ENCODE measurements at regions of chr1 and their contacts with region 1.

Region 1: DNA sequence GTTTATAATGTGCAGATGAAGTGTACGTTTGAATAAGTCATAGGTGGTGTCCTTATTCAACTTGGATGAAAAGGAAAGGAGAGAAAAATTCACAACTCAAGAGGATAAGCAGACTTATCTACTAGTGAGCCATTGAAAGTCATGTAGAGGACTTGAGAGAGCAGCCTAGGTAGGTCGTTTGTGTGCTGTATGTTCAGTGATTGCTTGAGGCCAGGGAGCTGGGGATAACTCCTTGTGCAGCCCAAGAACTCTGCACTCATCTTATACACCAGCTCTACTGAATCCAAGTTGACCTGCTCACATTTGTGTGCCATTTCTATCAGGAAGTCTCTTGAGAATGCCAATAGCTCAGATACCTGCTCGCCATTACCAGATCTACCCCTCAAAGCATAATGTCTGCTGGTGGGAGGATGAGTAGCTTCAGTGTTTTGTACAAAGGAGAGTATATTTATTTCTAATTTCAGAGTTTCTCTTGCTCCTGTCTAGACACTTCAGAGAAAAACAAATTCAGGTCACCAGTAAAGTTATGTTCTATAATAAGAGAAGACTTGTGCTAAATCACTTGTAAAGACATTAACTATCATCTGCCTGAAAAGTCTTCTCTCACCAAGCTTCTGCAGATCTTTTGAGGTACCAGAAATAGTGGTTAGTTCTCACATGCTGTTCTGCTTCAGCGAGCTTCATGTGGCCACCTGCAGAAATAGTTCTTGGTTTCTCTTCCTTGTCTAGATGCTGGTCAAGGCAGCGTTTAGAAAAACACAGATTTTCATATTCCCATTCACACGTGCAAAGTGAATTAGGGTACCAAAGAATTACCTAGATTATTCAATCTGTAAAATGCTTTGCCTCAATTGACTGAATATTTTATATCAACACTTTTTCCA is 10.8 kb downstream of the S1PR1 start:
- DNase-seq: no peak
- H3K4me3 ChIP-seq: no peak overlapping the region
- H3K4me3 Mint-ChIP-seq: no peak overlapping the region
- H3K27ac ChIP-seq: no peak overlapping the region
- H3K27ac Mint-ChIP-seq: peak overlapping the region in 1 of 7 donors; percentile 8
- H3K4me1 ChIP-seq: no peaks in the 10 kb centered on the region
- H3K4me1 Mint-ChIP-seq: no peaks in the 10 kb centered on the region
- H3K27me3 ChIP-seq: no peaks in the 10 kb centered on the region
- H3K27me3 Mint-ChIP-seq: peaks cover 2 to 5% (median 3%) of the 10 kb centered on the region in 3 donors
- CTCF ChIP-seq: no peak

Region 2: DNA sequence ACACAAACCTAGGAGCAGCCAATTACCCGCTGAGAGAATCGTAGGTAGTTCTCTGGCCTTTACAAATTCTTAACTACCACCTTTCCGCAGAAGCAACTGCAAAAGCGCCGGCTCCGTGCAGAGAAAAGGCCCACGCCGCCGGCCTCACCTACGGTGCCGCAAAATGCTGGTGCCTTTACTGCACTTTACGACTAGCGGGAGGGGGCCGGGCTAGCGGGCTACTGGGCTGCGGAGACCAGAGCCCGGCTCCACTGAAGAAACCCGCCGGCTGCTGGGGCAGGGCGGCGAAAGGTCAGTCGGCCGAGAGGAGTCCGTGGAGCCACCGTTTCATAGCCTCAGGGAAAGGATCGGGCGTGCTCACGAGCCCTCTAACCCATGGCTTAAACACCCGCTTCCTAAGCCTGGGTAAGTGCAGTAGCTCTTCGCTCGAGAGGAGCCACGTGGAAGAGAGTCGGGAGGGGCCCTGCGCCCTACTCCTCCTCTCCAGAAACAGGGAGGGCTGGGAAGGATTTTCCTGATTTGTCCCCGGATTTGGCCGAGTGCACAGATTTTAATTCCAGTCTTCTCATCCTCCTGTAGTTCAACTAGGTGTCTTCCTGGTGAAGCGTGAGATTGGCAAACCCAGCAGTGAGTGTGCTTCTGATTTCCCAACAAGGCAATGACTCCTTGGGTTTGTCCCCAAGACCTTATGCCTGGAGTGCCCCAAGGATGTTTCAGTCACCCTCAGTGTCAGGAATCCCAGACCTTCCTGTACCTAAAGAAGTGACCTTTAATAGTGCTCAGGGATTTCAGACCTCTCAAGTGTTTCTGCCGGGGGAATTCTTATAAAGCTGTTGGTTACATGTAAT is 221.8 kb before region 1 on chr1 and contains the start of gene DPH5:
- intact Hi-C with region 1: loop called in 1 of 2 experiments (anchors 10 kb)
- DNase-seq: peak; percentile 73 to 97 (median 86)
- H3K4me3 ChIP-seq: peak within 1 kb of the TSS; percentile 80 to 92 (median 89)
- H3K4me3 Mint-ChIP-seq: peak within 1 kb of the TSS; percentile 95 to 99
- H3K27ac ChIP-seq: peak within 1 kb of the TSS; percentile 75 to 95
- H3K27ac Mint-ChIP-seq: peak within 1 kb of the TSS; percentile 84 to 96 (median 94)
- H3K4me1 ChIP-seq: peaks cover 24 to 43% of the 10 kb centered on the region in 2 donors
- H3K4me1 Mint-ChIP-seq: peaks cover 41% of the 10 kb centered on the region
- H3K27me3 ChIP-seq: no peaks in the 10 kb centered on the region
- H3K27me3 Mint-ChIP-seq: no peaks in the 10 kb centered on the region
- CTCF ChIP-seq: no peak
- polyA plus RNA-seq, gene DPH5: 10.3 to 14.3 (median 12.0) TPM

Region 3: GRCh38 chr1:101198842-101199636 is 48.6 kb before region 1 on chr1:
- intact Hi-C with region 1: no loop called
- DNase-seq: no peak
- H3K4me3 ChIP-seq: no peak overlapping the region
- H3K4me3 Mint-ChIP-seq: no peak overlapping the region
- H3K27ac ChIP-seq: no peak overlapping the region
- H3K27ac Mint-ChIP-seq: no peak overlapping the region
- H3K4me1 ChIP-seq: no peaks in the 10 kb centered on the region
- H3K4me1 Mint-ChIP-seq: peaks cover 3% of the 10 kb centered on the region
- H3K27me3 ChIP-seq: no peaks in the 10 kb centered on the region
- H3K27me3 Mint-ChIP-seq: peaks cover 0 to 2% (median 0%) of the 10 kb centered on the region in 3 donors
- CTCF ChIP-seq: no peak

Region 4: DNA sequence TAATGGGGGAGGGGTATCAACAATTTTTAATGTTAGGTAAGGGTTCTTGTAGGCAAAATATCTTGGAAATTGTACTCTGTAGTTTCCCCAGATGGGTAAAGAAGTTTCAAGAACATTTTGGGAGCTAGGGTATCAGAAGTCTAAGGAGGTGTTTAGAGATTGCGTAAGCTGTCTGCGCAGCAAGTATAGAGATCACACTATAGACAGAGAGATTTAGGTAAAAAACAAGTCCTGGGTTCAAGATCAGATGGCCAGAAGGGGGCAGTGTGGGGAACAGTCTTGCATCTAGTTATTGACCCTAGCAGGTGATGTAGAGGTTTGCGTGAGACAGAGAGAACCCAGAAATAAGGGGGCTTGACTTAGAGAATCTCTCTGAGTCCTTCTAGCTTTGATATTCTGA is 69.9 kb after region 1 on chr1:
- intact Hi-C with region 1: no loop called
- DNase-seq: no peak
- H3K4me3 ChIP-seq: no peak overlapping the region
- H3K4me3 Mint-ChIP-seq: no peak overlapping the region
- H3K27ac ChIP-seq: no peak overlapping the region
- H3K27ac Mint-ChIP-seq: no peak overlapping the region
- H3K4me1 ChIP-seq: no peaks in the 10 kb centered on the region
- H3K4me1 Mint-ChIP-seq: peaks cover 2% of the 10 kb centered on the region
- H3K27me3 ChIP-seq: no peaks in the 10 kb centered on the region
- H3K27me3 Mint-ChIP-seq: peaks cover 2 to 5% (median 3%) of the 10 kb centered on the region in 3 donors
- CTCF ChIP-seq: no peak

Measured in CD14-positive monocyte (primary cell).